Dorsolateral prefrontal cortex (tissue), 120 donors: ENCODE measurements at regions of chr1 and their contacts with region 1.

Region 1: DNA sequence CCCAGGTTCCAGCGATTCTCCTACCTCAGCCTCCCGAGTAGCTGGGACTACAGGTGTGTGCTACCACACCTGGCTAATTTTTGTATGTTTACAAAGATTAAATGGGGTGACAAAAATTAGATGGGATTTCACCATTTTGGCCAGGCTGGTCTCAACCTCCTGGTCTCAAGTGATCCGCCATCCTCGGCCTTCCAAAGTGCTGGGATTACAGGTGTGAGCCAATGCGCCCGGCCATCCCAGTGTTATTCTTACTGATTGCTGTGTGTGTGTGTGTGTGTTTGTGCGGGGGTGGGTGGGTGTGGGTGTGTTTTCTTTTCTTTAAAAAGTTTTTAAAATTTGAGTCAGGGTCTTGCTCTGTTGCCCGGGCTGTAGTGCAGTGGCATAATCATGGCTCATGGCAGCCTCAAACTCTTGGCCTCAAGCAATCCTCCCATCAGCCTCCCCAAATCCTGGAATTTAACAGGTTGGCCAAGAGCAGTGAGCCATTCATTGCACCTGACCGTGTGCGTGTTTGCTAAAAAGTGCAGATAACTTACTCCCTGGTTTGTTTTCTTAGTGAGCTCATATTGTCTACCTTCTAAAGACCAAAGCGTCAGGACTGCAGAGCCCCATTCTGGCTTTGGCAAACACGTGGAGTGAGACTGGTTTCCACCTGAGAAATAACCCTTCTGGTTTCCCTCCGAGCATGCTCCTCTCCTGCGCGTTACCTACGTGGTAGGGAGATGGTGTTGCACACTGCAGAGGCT is 32.4 kb upstream of the CA6 start:
- DNase-seq: no peak
- H3K4me3 ChIP-seq: no peak overlapping the region
- H3K27ac ChIP-seq: no peak overlapping the region
- H3K27me3 ChIP-seq: no peaks in the 10 kb centered on the region
- CTCF ChIP-seq: no peak

Region 2: GRCh38 chr1:8878448-8879347 is 34.6 kb before region 1 on chr1 and contains the start of gene ENO1:
- intact Hi-C with region 1: loop called in 1 of 2 experiments (anchors 5 kb)
- DNase-seq: peak; percentile 99 to 100 (median 99)
- H3K4me3 ChIP-seq: peak within 1 kb of the TSS; percentile 67 to 100 (median 95)
- H3K27ac ChIP-seq: peak within 1 kb of the TSS; percentile 71 to 100 (median 98)
- H3K27me3 ChIP-seq: no peaks in the 10 kb centered on the region
- CTCF ChIP-seq: peak in 8 of 56 donors; percentile 5 to 25 (median 15)
- total RNA-seq, gene ENO1: 469 to 938 (median 635) TPM

Region 3: DNA sequence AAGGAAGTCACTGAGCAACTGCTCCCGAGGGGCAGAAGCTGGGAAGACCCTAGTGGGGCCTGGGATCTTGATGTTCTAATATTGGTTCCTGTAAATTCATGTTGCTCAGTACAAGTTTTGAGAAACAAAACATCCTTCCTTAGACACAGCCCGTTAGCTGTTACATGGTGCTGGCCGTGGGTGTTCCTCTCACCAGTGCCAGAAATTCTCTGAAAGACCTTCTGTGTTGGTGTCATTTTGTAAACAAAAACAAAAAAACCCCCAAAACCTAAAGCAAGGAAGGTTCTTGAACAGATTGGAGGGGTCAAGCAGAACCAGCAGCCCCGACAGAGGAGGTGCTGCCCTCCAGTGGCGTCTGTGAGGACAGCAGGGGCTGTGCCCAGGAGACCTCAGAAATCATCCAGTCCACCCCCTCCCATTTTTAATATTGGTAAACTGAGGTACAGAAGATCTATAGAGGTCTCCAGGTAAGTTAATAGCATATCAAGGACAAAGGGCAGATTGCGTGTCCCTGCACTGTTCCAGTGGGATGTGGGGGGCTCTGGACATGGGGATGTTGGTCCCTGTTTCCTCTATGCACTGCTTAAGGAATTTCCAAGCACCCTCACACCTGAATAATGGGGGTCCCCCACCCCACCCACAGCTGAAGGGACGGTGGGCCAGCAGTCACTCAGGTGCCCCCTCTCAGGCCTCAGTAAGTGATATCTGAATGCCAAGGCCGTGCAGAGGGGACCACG is 74.8 kb after region 1 on chr1:
- intact Hi-C with region 1: loop called (anchors 1 to 2 kb)
- DNase-seq: peak; percentile 28 to 84 (median 74)
- H3K4me3 ChIP-seq: peak overlapping the region in 3 of 59 donors; percentile 1 to 31 (median 8)
- H3K27ac ChIP-seq: peak overlapping the region in 57 of 59 donors; percentile 10 to 96 (median 79)
- H3K27me3 ChIP-seq: no peaks in the 10 kb centered on the region
- CTCF ChIP-seq: peak; percentile 76 to 98 (median 95)

Region 4: DNA sequence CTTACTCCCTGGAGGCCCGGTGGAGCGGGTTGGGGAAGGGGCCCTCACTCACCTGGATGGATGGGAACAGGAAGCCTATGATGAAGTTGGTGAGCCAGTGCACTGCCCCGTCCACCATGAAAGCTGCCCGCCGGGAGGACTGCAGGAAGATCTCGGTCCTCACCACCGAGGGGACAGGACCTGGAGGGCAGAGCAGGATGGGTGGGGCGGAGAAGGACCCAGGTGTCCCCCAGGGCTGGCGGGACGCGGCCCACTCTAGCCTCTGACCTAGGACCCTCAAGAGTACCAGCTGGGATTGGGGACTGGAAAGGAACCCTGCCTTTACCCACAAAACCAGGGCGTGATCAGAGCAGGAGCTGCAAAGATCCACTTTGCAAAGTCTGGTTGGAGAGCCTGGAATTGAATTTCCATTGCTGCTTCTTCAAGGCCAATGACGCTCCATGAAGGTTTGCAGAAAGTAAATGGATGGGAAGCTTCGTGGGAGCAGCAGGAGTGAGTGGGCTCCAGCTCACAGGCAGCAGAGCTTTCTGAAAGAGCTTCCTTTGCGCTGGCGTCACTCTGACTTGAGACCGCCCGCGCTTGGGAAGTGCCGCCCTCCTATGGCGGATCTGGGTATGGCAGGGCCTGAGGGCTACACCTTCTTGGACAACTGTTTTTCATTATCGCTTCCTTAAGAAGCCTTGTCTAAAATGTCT is 91.6 kb after region 1 on chr1:
- intact Hi-C with region 1: loop called in 1 of 2 experiments (anchors 5 kb)
- DNase-seq: peak; percentile 26 to 82 (median 74)
- H3K4me3 ChIP-seq: no peak overlapping the region
- H3K27ac ChIP-seq: no peak overlapping the region
- H3K27me3 ChIP-seq: no peaks in the 10 kb centered on the region
- CTCF ChIP-seq: peak; percentile 67 to 96 (median 88)

Region 5: GRCh38 chr1:9101510-9102146 is 188.3 kb after region 1 on chr1:
- intact Hi-C with region 1: loop called in 1 of 2 experiments (anchors 5 kb)
- DNase-seq: peak in 4 of 10 donors; percentile 39 to 53 (median 43)
- H3K4me3 ChIP-seq: no peak overlapping the region
- H3K27ac ChIP-seq: no peak overlapping the region
- H3K27me3 ChIP-seq: no peaks in the 10 kb centered on the region
- CTCF ChIP-seq: peak in 53 of 56 donors; percentile 25 to 74 (median 51)

Region 6: GRCh38 chr1:9196129-9197040 is 283.1 kb after region 1 on chr1:
- intact Hi-C with region 1: loop called in 1 of 2 experiments (anchors 5 kb)
- DNase-seq: peak; percentile 43 to 83 (median 74)
- H3K4me3 ChIP-seq: peak overlapping the region in 45 of 59 donors; percentile 0 to 52 (median 23)
- H3K27ac ChIP-seq: peak overlapping the region in 45 of 59 donors; percentile 1 to 78 (median 44)
- H3K27me3 ChIP-seq: peaks cover 0 to 39% (median 3%) of the 10 kb centered on the region in 45 donors
- CTCF ChIP-seq: peak; percentile 62 to 95 (median 86)

Region 7: GRCh38 chr1:9269078-9269501 is 355.8 kb after region 1 on chr1:
- intact Hi-C with region 1: loop called in 1 of 2 experiments (anchors 5 kb)
- DNase-seq: peak in 1 of 10 donors; percentile 28
- H3K4me3 ChIP-seq: no peak overlapping the region
- H3K27ac ChIP-seq: no peak overlapping the region
- H3K27me3 ChIP-seq: no peaks in the 10 kb centered on the region
- CTCF ChIP-seq: no peak